GM12878 (cell line): ENCODE measurements at regions of chr18 and their contacts with region 1.

Region 1: GRCh38 chr18:37476182-37476581 is 89.4 kb downstream of the CELF4 start:
- DNase-seq: no peak
- ATAC-seq: peak; percentile 75
- H3K4me3 ChIP-seq: no peak overlapping the region
- H3K27ac ChIP-seq: no peak overlapping the region
- H3K4me1 ChIP-seq: no peaks in the 10 kb centered on the region
- H3K27me3 ChIP-seq: peaks cover 2 to 3% of the 10 kb centered on the region in 2 experiments; a peak in 3 of 4 replicates
- CTCF ChIP-seq: peak; percentile 44 to 59 (median 57)
- EP300 ChIP-seq: no peak
- POLR2A ChIP-seq: no peak
- RAD21 ChIP-seq: peak; percentile 42

Region 2: DNA sequence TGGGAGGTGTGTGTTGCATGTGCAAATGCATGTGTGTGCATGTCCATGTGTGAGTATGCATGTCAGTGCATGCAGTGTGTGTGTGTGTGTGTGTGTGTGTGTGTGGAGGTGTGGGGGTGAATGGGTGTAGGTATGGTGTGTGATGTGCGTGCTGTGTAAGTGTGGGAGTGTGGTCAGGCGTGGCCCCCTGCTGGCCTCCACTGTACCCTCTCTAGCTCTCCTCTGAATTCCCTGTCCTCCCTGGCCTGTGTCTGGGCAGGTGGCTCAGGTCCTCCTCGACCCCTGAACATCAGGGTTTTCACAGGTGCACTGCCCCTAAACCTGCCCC is 140.8 kb before region 1 on chr18:
- CTCF ChIA-PET with region 1: no interaction called
- POLR2A ChIA-PET with region 1: no interaction called
- RAD21 ChIA-PET with region 1: no interaction called
- SMC1A ChIA-PET with region 1: no interaction called
- in situ Hi-C with region 1: no loop called
- intact Hi-C with region 1: no loop called
- DNase-seq: no peak
- ATAC-seq: no peak
- H3K4me3 ChIP-seq: no peak overlapping the region
- H3K27ac ChIP-seq: no peak overlapping the region
- H3K4me1 ChIP-seq: no peaks in the 10 kb centered on the region
- H3K27me3 ChIP-seq: no peaks in the 10 kb centered on the region; a peak in 2 of 4 replicates
- CTCF ChIP-seq: no peak
- EP300 ChIP-seq: no peak
- POLR2A ChIP-seq: no peak
- RAD21 ChIP-seq: no peak

Region 3: DNA sequence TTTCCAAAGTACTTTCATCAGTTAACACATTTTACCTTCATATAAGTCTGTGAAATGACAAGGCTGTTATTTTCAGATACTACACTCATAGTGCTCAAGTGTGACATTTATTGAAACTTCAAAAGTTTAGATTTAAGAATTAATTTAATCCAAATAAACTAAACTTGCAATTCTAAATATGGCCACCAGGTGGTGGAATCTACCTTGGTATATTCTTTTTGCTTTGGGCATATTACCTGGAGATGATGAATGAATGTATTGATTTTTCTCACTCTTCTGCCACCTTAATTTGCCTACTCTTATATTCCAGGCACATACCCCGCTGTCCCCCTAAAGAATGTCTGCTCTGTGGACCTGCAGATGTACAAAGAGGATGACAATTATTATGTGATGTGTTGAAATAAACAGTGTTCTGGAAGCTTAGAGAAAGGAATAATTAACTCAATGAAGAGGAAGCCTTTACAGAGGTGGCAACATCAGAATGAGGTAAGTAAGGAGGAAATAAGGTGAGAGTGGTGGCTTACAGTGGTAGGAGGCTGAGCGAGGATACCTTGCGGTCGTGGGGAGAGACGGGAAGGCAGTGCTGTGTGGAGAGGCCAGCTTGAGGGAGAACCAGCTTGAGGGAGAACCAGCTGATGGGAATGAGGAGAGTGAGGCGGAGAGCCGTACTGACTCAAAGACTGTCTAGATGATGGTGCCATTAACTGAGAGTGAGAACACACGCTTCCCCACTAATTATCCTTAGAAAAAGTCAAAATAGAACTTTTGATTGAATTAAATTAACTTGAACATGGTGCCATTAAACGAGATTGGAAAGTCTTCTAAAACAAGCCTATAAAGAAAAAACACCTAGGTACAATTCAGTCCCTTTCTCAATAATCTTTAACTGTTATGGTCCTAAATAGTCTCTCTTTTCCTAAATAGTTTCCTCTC is 90.1 kb before region 1 on chr18:
- CTCF ChIA-PET with region 1: interaction called, 5 read pairs
- POLR2A ChIA-PET with region 1: no interaction called
- RAD21 ChIA-PET with region 1: no interaction called
- SMC1A ChIA-PET with region 1: interaction called, 4 read pairs
- in situ Hi-C with region 1: loop called (anchors 5 kb)
- intact Hi-C with region 1: loop called (anchors 1 kb)
- DNase-seq: no peak
- ATAC-seq: peak; percentile 27; the same call in 1 of the 3 replicates
- H3K4me3 ChIP-seq: no peak overlapping the region
- H3K27ac ChIP-seq: no peak overlapping the region
- H3K4me1 ChIP-seq: no peaks in the 10 kb centered on the region
- H3K27me3 ChIP-seq: no peaks in the 10 kb centered on the region; a peak in 3 of 4 replicates
- CTCF ChIP-seq: peak; percentile 49 to 64 (median 53)
- EP300 ChIP-seq: no peak
- POLR2A ChIP-seq: no peak
- RAD21 ChIP-seq: peak; percentile 75